Posterior cingulate gyrus (tissue), 11 donors: ENCODE measurements at regions of chr2 and their contacts with region 1.

Region 1: DNA sequence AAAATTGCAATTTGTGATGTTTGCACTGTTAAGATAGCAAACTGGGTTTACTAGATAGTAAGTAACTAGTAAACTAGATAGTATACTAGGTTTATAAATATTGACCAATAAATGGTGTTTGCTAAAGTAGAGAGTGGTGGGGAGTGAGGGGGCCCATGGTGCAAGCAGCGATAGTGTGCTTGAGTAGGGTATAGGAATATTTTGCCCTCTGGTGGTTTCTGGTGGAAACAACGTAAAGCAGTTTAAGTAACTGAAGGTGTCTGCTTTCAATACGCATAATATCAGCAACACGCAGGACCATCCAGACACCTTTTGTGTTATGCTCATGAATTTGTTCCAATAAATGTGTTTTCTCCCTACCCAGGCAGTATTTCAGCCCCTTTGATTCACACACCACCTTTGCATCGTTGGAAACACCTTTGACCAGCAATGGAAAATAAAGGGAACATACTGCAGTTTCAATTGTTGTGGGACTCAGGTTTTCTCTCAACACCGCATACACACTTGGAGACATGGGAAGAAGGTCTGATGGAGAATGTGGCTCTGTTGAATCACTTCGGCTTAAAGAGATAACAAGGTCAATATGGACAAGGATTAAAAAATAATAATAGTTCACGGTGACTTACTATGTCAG is 16.7 kb upstream of the STAT1 start:
- DNase-seq: no peak

Region 2: GRCh38 chr2:190781604-190782198 is 248.9 kb before region 1 on chr2:
- intact Hi-C with region 1: loop called (anchors 5 kb)
- DNase-seq: peak in 3 of 10 donors; percentile 26 to 79 (median 45)